Breast epithelium (tissue), 4 donors: ENCODE measurements at regions of chr13 and their contacts with region 1.

Region 1: GRCh38 chr13:38902551-38902950 is 88.1 kb downstream of the STOML3 start:
- DNase-seq: no peak
- H3K4me3 ChIP-seq: no peak overlapping the region
- H3K27ac ChIP-seq: no peak overlapping the region
- H3K4me1 ChIP-seq: no peaks in the 10 kb centered on the region
- H3K27me3 ChIP-seq: no peaks in the 10 kb centered on the region
- CTCF ChIP-seq: no peak
- POLR2A ChIP-seq: no peak

Region 2: DNA sequence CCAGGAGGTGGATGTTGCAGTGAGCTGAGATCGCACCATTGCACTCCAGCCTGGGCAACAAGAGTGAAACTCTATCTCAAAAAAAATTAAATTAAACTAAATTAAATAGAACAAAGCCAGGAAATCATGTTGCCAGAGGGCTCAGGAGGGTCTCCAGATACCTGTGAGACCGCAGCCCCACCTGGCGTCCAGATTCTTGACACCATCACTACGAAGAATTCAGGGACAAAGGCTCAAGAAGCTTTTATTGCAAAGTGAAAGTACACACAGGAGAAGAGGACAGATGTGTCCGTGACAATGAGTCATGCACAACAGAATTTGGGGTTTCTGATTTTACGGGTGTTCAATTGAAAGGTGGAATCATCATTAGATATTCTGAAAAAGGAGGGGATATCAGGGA is 11.5 kb after region 1 on chr13:
- intact Hi-C with region 1: loop called (anchors 2 kb)
- DNase-seq: no peak
- H3K4me3 ChIP-seq: no peak overlapping the region
- H3K27ac ChIP-seq: no peak overlapping the region
- H3K4me1 ChIP-seq: no peaks in the 10 kb centered on the region
- H3K27me3 ChIP-seq: no peaks in the 10 kb centered on the region
- CTCF ChIP-seq: no peak
- POLR2A ChIP-seq: no peak

Region 3: GRCh38 chr13:39881887-39882286 is 979.3 kb after region 1 on chr13:
- intact Hi-C with region 1: no loop called
- DNase-seq: no peak
- H3K4me3 ChIP-seq: no peak overlapping the region
- H3K27ac ChIP-seq: no peak overlapping the region
- H3K4me1 ChIP-seq: no peaks in the 10 kb centered on the region
- H3K27me3 ChIP-seq: no peaks in the 10 kb centered on the region
- CTCF ChIP-seq: no peak
- POLR2A ChIP-seq: no peak

Region 4: DNA sequence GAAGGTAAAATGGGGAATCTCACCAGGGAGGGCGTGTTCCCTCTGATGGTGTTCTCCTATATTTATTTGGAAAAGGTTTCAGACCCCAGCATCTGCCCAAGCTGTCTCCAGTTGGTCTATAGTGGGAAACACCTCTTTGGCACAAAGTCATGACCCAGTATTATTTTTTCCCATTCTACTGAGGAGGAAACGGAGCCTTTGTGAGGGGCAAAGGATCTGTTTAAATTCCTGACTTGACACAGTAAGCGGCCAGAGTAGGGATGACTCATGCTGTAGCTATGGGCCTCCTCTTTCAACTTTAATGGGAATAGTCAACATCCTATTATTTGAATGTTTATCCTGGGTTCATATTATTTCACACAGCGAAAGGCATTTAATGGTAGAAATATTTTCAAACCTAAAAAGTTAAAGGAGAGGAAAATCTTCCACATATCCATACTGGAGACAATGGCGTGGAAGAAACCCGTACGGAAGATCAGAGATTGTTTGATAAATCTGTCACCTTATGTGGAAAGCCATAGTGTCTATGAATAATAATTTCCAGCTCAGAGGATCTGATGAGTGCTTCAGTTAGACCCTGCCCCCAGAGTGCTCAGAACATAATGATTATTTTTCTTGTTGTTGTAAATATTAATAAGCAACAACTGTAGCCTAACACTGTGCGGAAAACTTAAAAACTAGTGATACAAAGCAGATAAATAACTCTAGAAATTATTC is 1637.9 kb after region 1 on chr13:
- intact Hi-C with region 1: no loop called
- DNase-seq: no peak
- H3K4me3 ChIP-seq: no peak overlapping the region
- H3K27ac ChIP-seq: peak overlapping the region in 1 of 2 donors; percentile 45
- H3K4me1 ChIP-seq: peaks cover 0 to 6% of the 10 kb centered on the region in 2 donors
- H3K27me3 ChIP-seq: no peaks in the 10 kb centered on the region
- CTCF ChIP-seq: no peak
- POLR2A ChIP-seq: no peak